Head of caudate nucleus (tissue), 42 donors: ENCODE measurements at regions of chr2 and their contacts with region 1.

Region 1: GRCh38 chr2:231604685-231605606 is 12.3 kb downstream of the TEX44 start:
- DNase-seq: peak; percentile 97 to 100 (median 100)

Region 2: DNA sequence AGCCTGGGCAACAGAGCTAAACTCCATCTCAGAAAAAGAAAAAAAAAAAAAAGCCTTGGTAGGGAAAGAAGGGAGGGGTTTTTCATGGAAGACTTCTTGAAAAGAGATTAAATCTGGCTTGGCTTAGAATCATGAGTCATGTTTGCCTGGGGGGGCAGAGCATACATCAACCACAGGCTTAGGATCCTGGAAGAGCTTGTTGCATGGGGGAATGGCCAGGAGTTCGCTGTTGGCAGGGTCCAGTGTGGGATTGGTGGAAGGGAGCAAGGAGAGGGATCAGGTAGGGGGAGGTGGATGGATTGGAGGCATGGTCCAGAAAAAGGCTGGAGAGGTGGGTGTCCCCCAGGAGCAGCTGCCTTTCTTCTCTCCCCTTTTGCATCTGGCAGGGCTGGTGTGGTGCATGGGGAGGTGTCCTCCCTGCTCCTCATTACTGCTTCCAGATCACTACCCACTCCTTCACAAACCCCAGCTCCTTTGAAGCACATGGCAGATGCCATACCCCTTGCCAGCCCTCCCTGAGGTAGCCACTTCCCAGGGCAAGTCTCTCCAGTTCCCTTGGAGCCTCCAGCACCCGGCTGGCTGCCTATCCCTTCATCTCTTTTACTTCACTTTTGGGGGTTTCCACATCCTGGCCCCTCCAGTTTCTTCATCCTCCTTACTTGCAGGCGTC is 404.0 kb before region 1 on chr2:
- intact Hi-C with region 1: no loop called
- DNase-seq: peak in 7 of 42 donors; percentile 9 to 54 (median 27)

Region 3: GRCh38 chr2:231467613-231468530 is 137.1 kb before region 1 on chr2:
- intact Hi-C with region 1: no loop called
- DNase-seq: peak in 4 of 42 donors; percentile 0 to 29 (median 8)

Region 4: DNA sequence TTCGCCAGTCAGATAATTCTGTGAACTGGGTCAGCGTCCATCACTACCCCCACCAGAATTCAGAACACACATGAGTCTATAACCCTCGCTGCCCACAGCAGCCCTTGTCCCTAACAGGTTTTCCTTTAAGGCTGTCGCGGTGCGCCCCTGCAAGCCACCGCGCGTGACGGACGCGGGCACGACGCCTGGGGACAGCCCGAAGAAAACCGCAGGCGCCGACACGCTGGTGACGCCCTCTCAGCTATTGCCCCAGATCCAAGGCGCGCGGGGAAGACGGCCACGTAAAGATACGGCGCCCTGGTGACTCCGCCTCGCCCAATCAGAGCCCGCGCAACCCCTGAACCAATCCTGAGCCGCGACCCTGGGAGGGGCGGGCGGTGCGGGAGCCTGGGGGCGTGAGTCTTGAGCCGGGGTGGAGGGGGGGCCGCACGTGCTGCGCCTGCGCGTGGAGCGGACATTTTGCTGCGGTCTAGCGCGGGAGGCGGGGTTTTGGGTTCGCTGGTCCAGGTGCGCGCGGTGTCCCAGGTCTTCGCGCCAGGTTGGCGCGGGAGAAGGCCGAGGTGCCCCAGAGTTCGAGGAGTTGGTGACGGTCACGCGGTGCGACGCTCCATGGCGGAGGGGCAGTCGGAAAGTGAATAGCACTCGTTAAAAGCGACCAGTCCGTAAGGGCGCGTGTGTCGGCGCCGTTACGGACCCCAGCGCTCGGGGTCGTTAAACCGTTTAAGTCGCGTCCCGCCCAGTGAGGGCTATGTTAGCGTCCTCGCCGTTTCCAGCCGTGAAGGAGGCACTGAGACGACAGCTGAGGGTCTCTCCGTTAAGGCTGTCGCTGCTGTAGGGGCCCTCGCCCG is 90.6 kb before region 1 on chr2:
- intact Hi-C with region 1: loop called (anchors 5 kb)
- DNase-seq: peak; percentile 97 to 99 (median 98)

Region 5: GRCh38 chr2:231563378-231563961 is 41.5 kb before region 1 on chr2:
- intact Hi-C with region 1: loop called (anchors 5 kb)
- DNase-seq: peak; percentile 57 to 92 (median 80)